Endothelial cell of umbilical vein (primary cell): ENCODE measurements at regions of chr12 and their contacts with region 1.

Region 1: GRCh38 chr12:91985002-91985787 is 160.5 kb downstream of the BTG1 start:
- DNase-seq: peak; percentile 13
- H3K4me3 ChIP-seq: no peak overlapping the region
- H3K27ac ChIP-seq: no peak overlapping the region
- H3K4me1 ChIP-seq: peaks cover 55% of the 10 kb centered on the region
- H3K27me3 ChIP-seq: no peaks in the 10 kb centered on the region
- CTCF ChIP-seq: no peak
- POLR2A ChIP-seq: no peak

Region 2: DNA sequence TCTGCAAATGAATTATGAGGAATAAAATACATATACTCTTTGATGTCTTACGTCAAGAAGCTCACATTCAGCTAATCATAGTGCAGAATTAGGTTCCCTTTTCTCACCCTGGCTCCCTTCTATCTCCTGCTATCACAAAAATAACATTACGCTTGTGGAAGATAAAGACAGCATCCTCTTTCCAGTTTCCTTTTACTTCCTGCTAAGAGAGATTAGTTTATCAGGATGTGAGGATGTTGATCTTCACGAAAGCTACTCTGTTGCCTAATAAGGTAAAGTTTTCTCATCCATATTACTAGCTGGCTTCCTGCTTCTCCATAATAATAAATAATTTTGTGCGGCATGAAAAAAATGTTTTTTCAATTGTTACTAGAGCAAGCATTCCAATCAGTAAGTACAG is 584.9 kb before region 1 on chr12:
- CTCF ChIA-PET with region 1: no interaction called
- POLR2A ChIA-PET with region 1: no interaction called
- dilution Hi-C with region 1: no loop called
- intact Hi-C with region 1: loop called (anchors 1 kb)
- DNase-seq: peak; percentile 93
- H3K4me3 ChIP-seq: no peak overlapping the region
- H3K27ac ChIP-seq: peak overlapping the region; percentile 48
- H3K4me1 ChIP-seq: peaks cover 22% of the 10 kb centered on the region
- H3K27me3 ChIP-seq: no peaks in the 10 kb centered on the region
- CTCF ChIP-seq: no peak
- POLR2A ChIP-seq: no peak

Region 3: GRCh38 chr12:91577586-91578539 is 407.3 kb before region 1 on chr12:
- CTCF ChIA-PET with region 1: no interaction called
- POLR2A ChIA-PET with region 1: no interaction called
- dilution Hi-C with region 1: no loop called
- intact Hi-C with region 1: loop called (anchors 1 kb)
- DNase-seq: peak; percentile 61
- H3K4me3 ChIP-seq: peak overlapping the region in 1 of 3 experiments; percentile 73
- H3K27ac ChIP-seq: no peak overlapping the region
- H3K4me1 ChIP-seq: peaks cover 4% of the 10 kb centered on the region
- H3K27me3 ChIP-seq: no peaks in the 10 kb centered on the region
- CTCF ChIP-seq: peak; percentile 20 to 21
- POLR2A ChIP-seq: no peak

Region 4: DNA sequence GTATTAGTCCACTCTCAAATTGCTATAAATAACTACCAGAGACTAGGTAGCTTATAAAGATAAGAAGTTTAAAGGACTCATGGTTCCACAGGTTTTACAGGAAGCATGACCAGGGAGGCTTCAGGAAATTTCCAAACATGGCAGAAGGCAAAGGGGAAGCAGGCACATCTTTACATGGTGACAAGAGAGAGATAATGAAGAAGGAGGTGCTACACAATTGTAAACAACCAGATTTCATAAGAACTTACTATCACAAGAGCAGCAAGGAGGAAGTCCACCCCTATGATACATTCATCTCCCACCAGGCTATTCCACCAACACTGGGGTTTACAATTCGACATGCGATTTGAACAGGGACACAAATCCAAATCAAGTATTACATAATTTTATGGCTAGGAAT is 97.2 kb before region 1 on chr12:
- CTCF ChIA-PET with region 1: no interaction called
- POLR2A ChIA-PET with region 1: no interaction called
- dilution Hi-C with region 1: no loop called
- intact Hi-C with region 1: loop called (anchors 5 kb)
- DNase-seq: no peak
- H3K4me3 ChIP-seq: no peak overlapping the region
- H3K27ac ChIP-seq: no peak overlapping the region
- H3K4me1 ChIP-seq: peaks cover 8% of the 10 kb centered on the region
- H3K27me3 ChIP-seq: no peaks in the 10 kb centered on the region
- CTCF ChIP-seq: no peak
- POLR2A ChIP-seq: no peak

Region 5: DNA sequence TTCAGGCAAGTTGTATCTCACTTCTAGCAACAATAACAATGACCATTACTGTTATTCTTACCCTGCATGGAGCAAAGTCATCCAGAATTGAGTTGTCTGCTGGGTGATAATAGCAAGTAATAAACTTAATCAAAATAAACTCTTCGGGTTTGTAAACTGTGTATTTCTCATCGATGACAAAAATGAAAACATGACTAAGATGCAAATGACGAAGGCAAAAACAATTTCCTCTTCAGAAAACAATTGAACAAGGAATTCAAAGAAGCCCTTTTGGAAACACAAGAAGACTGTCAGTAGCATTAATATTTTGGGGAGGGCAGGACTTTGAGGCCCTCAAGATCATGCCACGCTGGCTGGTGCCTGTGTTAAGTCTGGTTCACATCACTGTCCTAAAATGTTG is 71.5 kb before region 1 on chr12:
- CTCF ChIA-PET with region 1: no interaction called
- POLR2A ChIA-PET with region 1: no interaction called
- dilution Hi-C with region 1: no loop called
- intact Hi-C with region 1: loop called (anchors 1 kb)
- DNase-seq: peak; percentile 29
- H3K4me3 ChIP-seq: no peak overlapping the region
- H3K27ac ChIP-seq: peak overlapping the region; percentile 63
- H3K4me1 ChIP-seq: peaks cover 12% of the 10 kb centered on the region
- H3K27me3 ChIP-seq: no peaks in the 10 kb centered on the region
- CTCF ChIP-seq: no peak
- POLR2A ChIP-seq: no peak

Region 6: GRCh38 chr12:91926848-91927247 is 58.3 kb before region 1 on chr12:
- CTCF ChIA-PET with region 1: no interaction called
- POLR2A ChIA-PET with region 1: no interaction called
- dilution Hi-C with region 1: no loop called
- intact Hi-C with region 1: loop called (anchors 1 kb)
- DNase-seq: peak; percentile 85
- H3K4me3 ChIP-seq: no peak overlapping the region
- H3K27ac ChIP-seq: peak overlapping the region; percentile 24
- H3K4me1 ChIP-seq: peaks cover 10% of the 10 kb centered on the region
- H3K27me3 ChIP-seq: no peaks in the 10 kb centered on the region
- CTCF ChIP-seq: no peak
- POLR2A ChIP-seq: no peak

Region 7: GRCh38 chr12:92049403-92049802 is 64.2 kb after region 1 on chr12:
- CTCF ChIA-PET with region 1: no interaction called
- POLR2A ChIA-PET with region 1: no interaction called
- dilution Hi-C with region 1: no loop called
- intact Hi-C with region 1: no loop called
- DNase-seq: no peak
- H3K4me3 ChIP-seq: no peak overlapping the region
- H3K27ac ChIP-seq: no peak overlapping the region
- H3K4me1 ChIP-seq: no peaks in the 10 kb centered on the region
- H3K27me3 ChIP-seq: no peaks in the 10 kb centered on the region
- CTCF ChIP-seq: no peak
- POLR2A ChIP-seq: no peak

Region 8: DNA sequence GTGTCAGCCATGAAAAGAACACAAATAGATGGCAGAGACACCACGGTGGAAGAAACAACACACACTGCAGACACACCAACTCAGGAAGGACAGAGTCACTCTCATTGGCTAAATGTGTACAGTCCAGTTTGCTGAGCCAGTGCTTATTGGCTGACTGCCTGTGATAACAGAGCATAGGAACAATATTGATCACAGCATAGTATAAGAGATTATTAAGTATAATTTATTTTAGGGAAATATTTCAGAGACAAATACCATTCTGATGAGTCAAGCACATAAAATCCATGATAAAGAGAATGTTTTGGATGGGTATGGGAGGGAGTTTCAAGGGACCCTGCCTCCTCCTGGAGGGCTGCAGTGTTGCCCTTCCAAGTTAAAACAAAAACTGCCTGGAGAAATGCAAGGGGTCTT is 109.6 kb after region 1 on chr12:
- CTCF ChIA-PET with region 1: no interaction called
- POLR2A ChIA-PET with region 1: no interaction called
- dilution Hi-C with region 1: no loop called
- intact Hi-C with region 1: loop called (anchors 2 kb)
- DNase-seq: peak; percentile 44
- H3K4me3 ChIP-seq: no peak overlapping the region
- H3K27ac ChIP-seq: peak overlapping the region; percentile 49
- H3K4me1 ChIP-seq: peaks cover 18% of the 10 kb centered on the region
- H3K27me3 ChIP-seq: no peaks in the 10 kb centered on the region
- CTCF ChIP-seq: peak in 1 of 2 donors; percentile 10
- POLR2A ChIP-seq: no peak